CD4-positive, alpha-beta T cell (primary cell): ENCODE measurements at regions of chr1 and their contacts with region 1.

Region 1: GRCh38 chr1:201970334-201971159 is 11.9 kb upstream of the RNPEP start:
- DNase-seq: no peak
- ATAC-seq: no peak
- H3K4me3 ChIP-seq: no peak overlapping the region
- H3K4me3 Mint-ChIP-seq: no peak overlapping the region
- H3K27ac ChIP-seq: no peak overlapping the region
- H3K27ac Mint-ChIP-seq: no peak overlapping the region
- H3K4me1 ChIP-seq: peaks cover 3% of the 10 kb centered on the region
- H3K4me1 Mint-ChIP-seq: no peaks in the 10 kb centered on the region
- H3K27me3 ChIP-seq: no peaks in the 10 kb centered on the region
- H3K27me3 Mint-ChIP-seq: no peaks in the 10 kb centered on the region
- CTCF ChIP-seq: no peak

Region 2: GRCh38 chr1:201559679-201560162 is 410.8 kb before region 1 on chr1:
- CTCF ChIA-PET with region 1: no interaction called
- POLR2A ChIA-PET with region 1: no interaction called
- intact Hi-C with region 1: loop called in 1 of 2 experiments (anchors 5 kb)
- DNase-seq: peak; percentile 47 to 82 (median 60)
- ATAC-seq: peak; percentile 98
- H3K4me3 ChIP-seq: no peak overlapping the region
- H3K4me3 Mint-ChIP-seq: no peak overlapping the region
- H3K27ac ChIP-seq: no peak overlapping the region
- H3K27ac Mint-ChIP-seq: no peak overlapping the region
- H3K4me1 ChIP-seq: peaks cover 4% of the 10 kb centered on the region
- H3K4me1 Mint-ChIP-seq: peaks cover 6% of the 10 kb centered on the region
- H3K27me3 ChIP-seq: no peaks in the 10 kb centered on the region
- H3K27me3 Mint-ChIP-seq: no peaks in the 10 kb centered on the region
- CTCF ChIP-seq: peak; percentile 94

Region 3: GRCh38 chr1:201709564-201710295 is 260.8 kb before region 1 on chr1:
- CTCF ChIA-PET with region 1: no interaction called
- POLR2A ChIA-PET with region 1: no interaction called
- intact Hi-C with region 1: loop called in 1 of 2 experiments (anchors 5 kb)
- DNase-seq: peak; percentile 27 to 67 (median 45)
- ATAC-seq: peak; percentile 78
- H3K4me3 ChIP-seq: no peak overlapping the region
- H3K4me3 Mint-ChIP-seq: no peak overlapping the region
- H3K27ac ChIP-seq: no peak overlapping the region
- H3K27ac Mint-ChIP-seq: no peak overlapping the region
- H3K4me1 ChIP-seq: peaks cover 3% of the 10 kb centered on the region
- H3K4me1 Mint-ChIP-seq: no peaks in the 10 kb centered on the region
- H3K27me3 ChIP-seq: no peaks in the 10 kb centered on the region
- H3K27me3 Mint-ChIP-seq: no peaks in the 10 kb centered on the region
- CTCF ChIP-seq: peak; percentile 80

Region 4: GRCh38 chr1:201818971-201819750 is 151.4 kb before region 1 on chr1:
- CTCF ChIA-PET with region 1: no interaction called
- POLR2A ChIA-PET with region 1: no interaction called
- intact Hi-C with region 1: no loop called
- DNase-seq: no peak
- ATAC-seq: no peak
- H3K4me3 ChIP-seq: no peak overlapping the region
- H3K4me3 Mint-ChIP-seq: no peak overlapping the region
- H3K27ac ChIP-seq: no peak overlapping the region
- H3K27ac Mint-ChIP-seq: no peak overlapping the region
- H3K4me1 ChIP-seq: no peaks in the 10 kb centered on the region
- H3K4me1 Mint-ChIP-seq: no peaks in the 10 kb centered on the region
- H3K27me3 ChIP-seq: no peaks in the 10 kb centered on the region
- H3K27me3 Mint-ChIP-seq: no peaks in the 10 kb centered on the region
- CTCF ChIP-seq: no peak

Region 5: GRCh38 chr1:201850053-201850397 is 120.5 kb before region 1 on chr1:
- CTCF ChIA-PET with region 1: no interaction called
- POLR2A ChIA-PET with region 1: no interaction called
- intact Hi-C with region 1: no loop called
- DNase-seq: no peak
- ATAC-seq: no peak
- H3K4me3 ChIP-seq: no peak overlapping the region
- H3K4me3 Mint-ChIP-seq: no peak overlapping the region
- H3K27ac ChIP-seq: no peak overlapping the region
- H3K27ac Mint-ChIP-seq: no peak overlapping the region
- H3K4me1 ChIP-seq: no peaks in the 10 kb centered on the region
- H3K4me1 Mint-ChIP-seq: peaks cover 15% of the 10 kb centered on the region
- H3K27me3 ChIP-seq: no peaks in the 10 kb centered on the region
- H3K27me3 Mint-ChIP-seq: no peaks in the 10 kb centered on the region
- CTCF ChIP-seq: no peak

Region 6: DNA sequence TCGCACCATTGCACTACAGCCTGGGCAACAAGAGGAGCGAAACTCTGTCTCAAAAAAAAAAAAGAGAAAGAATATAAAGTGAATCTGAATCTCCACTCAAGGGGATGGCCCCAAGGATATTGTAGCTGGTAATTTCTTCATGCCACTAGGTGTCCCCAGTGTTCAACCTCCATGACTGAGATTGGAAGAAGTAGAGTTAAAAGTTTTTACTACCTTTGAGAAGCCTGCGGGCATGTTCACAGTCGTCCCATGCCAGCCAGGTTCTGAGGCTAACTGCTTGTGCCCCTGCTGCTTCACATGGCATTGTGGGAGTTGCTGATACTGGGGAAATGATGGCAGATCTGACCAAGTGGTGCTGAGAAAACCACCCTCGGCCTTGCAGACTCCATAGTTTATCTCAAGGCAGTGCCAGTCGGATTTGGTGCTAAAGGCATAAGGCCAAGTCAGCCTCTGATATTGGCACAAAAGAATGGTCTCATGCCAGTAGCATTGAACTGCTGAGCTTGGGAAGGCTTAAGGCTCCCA is 92.6 kb before region 1 on chr1:
- CTCF ChIA-PET with region 1: interaction called, 7 read pairs
- POLR2A ChIA-PET with region 1: no interaction called
- intact Hi-C with region 1: loop called in 1 of 2 experiments (anchors 5 kb)
- DNase-seq: peak in 3 of 14 experiments; percentile 15 to 50 (median 46)
- ATAC-seq: no peak
- H3K4me3 ChIP-seq: no peak overlapping the region
- H3K4me3 Mint-ChIP-seq: no peak overlapping the region
- H3K27ac ChIP-seq: no peak overlapping the region
- H3K27ac Mint-ChIP-seq: peak overlapping the region; percentile 27
- H3K4me1 ChIP-seq: no peaks in the 10 kb centered on the region
- H3K4me1 Mint-ChIP-seq: no peaks in the 10 kb centered on the region
- H3K27me3 ChIP-seq: no peaks in the 10 kb centered on the region
- H3K27me3 Mint-ChIP-seq: no peaks in the 10 kb centered on the region
- CTCF ChIP-seq: peak; percentile 63

Region 7: DNA sequence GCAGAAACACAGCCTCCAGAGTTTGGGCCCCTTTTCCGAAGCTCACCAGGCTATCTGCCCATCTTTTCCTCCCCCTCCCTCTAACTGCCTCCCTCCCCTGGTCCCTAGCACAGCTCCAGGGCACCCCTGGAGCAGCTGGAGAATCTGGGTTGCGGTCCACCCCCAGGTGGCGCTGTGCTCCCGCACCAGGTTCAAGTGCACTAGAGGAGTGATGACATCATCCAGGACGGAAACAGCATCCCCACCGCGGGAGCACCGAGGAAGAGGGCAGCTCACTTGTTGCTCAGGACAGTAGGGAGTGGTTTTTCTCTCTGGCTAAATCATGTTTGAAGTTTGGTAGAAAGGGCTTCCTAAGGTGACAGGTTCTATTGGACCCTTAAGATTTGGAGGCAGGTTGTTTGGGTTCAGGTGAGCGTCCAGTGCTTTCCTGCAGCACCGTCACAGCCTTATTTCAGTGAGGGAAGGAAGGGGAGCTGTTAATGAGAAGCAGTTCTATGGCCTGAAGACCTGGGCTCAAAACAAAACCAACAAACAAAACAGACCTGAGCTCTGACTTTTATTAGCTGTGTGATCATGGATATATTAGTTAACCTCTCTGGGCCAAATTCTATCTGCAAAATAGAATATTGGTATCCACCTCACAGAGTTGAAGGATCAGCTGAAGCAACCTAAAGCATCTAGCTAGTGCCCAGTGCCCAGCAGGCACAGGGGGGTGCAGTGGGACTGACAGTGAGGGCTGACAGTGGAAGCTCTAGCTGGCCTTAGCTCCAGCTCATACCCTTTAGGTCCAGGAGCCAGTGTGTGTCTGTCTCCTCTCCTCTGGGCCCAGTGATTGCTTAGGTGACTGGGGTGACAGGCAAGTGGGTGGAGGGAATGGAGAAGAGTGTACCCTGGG is 74.4 kb before region 1 on chr1:
- CTCF ChIA-PET with region 1: interaction called, 19 read pairs
- POLR2A ChIA-PET with region 1: interaction called, 4 read pairs
- intact Hi-C with region 1: loop called (anchors 1 kb)
- DNase-seq: peak; percentile 61 to 89 (median 74)
- ATAC-seq: peak; percentile 91
- H3K4me3 ChIP-seq: no peak overlapping the region
- H3K4me3 Mint-ChIP-seq: peak overlapping the region; percentile 46
- H3K27ac ChIP-seq: no peak overlapping the region
- H3K27ac Mint-ChIP-seq: no peak overlapping the region
- H3K4me1 ChIP-seq: peaks cover 9% of the 10 kb centered on the region
- H3K4me1 Mint-ChIP-seq: peaks cover 7% of the 10 kb centered on the region
- H3K27me3 ChIP-seq: peaks cover 4 to 14% of the 10 kb centered on the region in 2 experiments
- H3K27me3 Mint-ChIP-seq: peaks cover 47% of the 10 kb centered on the region
- CTCF ChIP-seq: peak; percentile 77